Heart left ventricle (tissue), 16 donors: ENCODE measurements at regions of chr6 and their contacts with region 1.

Region 1: GRCh38 chr6:27188885-27189418 is 58.5 kb upstream of the PRSS16 start:
- DNase-seq: peak in 4 of 5 donors; percentile 52 to 65 (median 54)
- ATAC-seq: peak; percentile 77 to 97 (median 93)
- H3K4me3 ChIP-seq: peak overlapping the region; percentile 30 to 75 (median 65)
- H3K27ac ChIP-seq: peak overlapping the region in 11 of 12 donors; percentile 45 to 80 (median 65)
- H3K4me1 ChIP-seq: peaks cover 0 to 9% (median 4%) of the 10 kb centered on the region in 12 donors
- H3K27me3 ChIP-seq: peaks cover 0 to 4% (median 0%) of the 10 kb centered on the region in 9 donors
- CTCF ChIP-seq: peak; percentile 65 to 85 (median 78)
- POLR2A ChIP-seq: no peak

Region 2: GRCh38 chr6:27114792-27115191 is 74.2 kb before region 1 on chr6:
- intact Hi-C with region 1: no loop called
- DNase-seq: no peak
- ATAC-seq: no peak
- H3K4me3 ChIP-seq: no peak overlapping the region
- H3K27ac ChIP-seq: no peak overlapping the region
- H3K4me1 ChIP-seq: no peaks in the 10 kb centered on the region
- H3K27me3 ChIP-seq: no peaks in the 10 kb centered on the region
- CTCF ChIP-seq: no peak
- POLR2A ChIP-seq: no peak

Region 3: GRCh38 chr6:27472617-27473400 is 283.9 kb after region 1 on chr6 and contains the start of gene ZNF184:
- intact Hi-C with region 1: loop called in 4 of 10 experiments (anchors 10 kb)
- DNase-seq: peak; percentile 95 to 96 (median 96)
- ATAC-seq: peak; percentile 99 to 100 (median 100)
- H3K4me3 ChIP-seq: peak within 1 kb of the TSS; percentile 52 to 99 (median 86)
- H3K27ac ChIP-seq: peak within 1 kb of the TSS; percentile 34 to 92 (median 86)
- H3K4me1 ChIP-seq: peaks cover 0 to 37% (median 19%) of the 10 kb centered on the region in 12 donors
- H3K27me3 ChIP-seq: no peaks in the 10 kb centered on the region
- CTCF ChIP-seq: peak in 3 of 12 donors; percentile 2 to 29 (median 24)
- POLR2A ChIP-seq: peak in 1 of 2 donors; percentile 78
- total RNA-seq, gene ZNF184: 3.2 to 6.5 (median 4.0) TPM

Region 4: DNA sequence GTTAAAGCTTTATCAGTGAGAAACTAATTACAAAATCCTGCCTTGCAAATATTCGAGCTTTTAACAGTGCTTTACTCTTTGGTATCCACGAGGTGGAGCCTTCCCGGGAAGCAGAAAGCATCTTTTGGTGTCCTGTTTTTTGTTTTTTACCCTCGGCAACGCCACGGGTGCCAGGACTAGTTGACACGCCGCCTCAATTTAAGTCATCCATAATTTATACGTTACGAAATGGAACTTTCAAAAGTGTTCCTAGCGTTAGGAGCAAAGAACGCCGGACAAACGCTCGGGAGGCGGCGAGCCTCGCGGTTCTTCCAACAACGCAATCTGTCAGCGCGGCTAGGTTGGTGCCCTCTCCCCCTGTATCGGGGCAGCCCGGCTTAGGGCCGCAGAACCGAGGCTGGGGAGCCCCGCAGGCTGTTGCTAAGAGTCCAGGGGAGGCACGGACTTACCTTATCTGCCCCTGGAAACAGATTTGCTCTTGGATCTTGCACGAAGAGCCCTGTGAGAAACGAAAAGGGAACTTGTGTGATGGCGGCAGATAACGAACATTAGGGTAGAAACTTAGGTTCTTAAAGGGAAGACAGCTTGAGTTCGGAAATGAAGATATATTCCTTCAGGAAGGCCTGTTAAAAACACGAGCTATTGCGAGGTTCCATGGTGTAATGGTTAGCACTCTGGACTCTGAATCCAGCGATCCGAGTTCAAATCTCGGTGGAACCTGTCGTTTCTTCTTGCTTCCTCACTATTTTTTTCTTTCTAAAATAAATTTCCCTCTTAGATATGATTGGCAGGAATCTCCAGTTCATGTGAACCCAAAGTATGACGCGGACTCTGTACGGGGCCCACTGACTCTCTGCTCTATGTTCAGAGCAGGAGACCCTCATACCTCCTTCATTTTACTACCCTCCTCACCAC is 330.2 kb after region 1 on chr6:
- intact Hi-C with region 1: loop called in 1 of 10 experiments (anchors 10 kb)
- DNase-seq: peak; percentile 50 to 71 (median 55)
- ATAC-seq: peak; percentile 90 to 95 (median 93)
- H3K4me3 ChIP-seq: peak overlapping the region; percentile 43 to 83 (median 70)
- H3K27ac ChIP-seq: peak overlapping the region; percentile 68 to 94 (median 80)
- H3K4me1 ChIP-seq: peaks cover 0 to 13% (median 7%) of the 10 kb centered on the region in 12 donors
- H3K27me3 ChIP-seq: peaks cover 0 to 23% (median 7%) of the 10 kb centered on the region in 9 donors
- CTCF ChIP-seq: peak; percentile 48 to 78 (median 66)
- POLR2A ChIP-seq: no peak

Region 5: DNA sequence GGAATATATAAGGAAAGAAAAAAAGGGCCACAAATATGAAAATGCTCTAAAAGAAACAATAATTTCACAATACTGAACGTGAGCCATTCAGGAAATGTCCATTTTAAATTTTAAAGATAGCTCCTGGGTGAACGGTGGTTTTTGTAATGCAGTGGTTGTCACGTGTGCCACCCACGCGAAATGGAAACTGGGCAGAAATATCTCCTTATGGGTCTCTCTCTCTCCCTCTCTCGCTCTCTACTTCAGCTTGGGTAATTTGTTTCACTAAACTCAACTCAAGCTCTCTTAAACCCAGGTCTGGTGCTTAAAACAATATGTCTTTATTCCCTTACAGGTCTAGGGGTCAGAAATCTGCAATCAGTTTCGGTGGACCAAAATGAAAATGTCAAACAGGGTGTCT is 572.4 kb after region 1 on chr6:
- intact Hi-C with region 1: loop called in 1 of 10 experiments (anchors 10 kb)
- DNase-seq: no peak
- ATAC-seq: no peak
- H3K4me3 ChIP-seq: no peak overlapping the region
- H3K27ac ChIP-seq: no peak overlapping the region
- H3K4me1 ChIP-seq: peaks cover 0 to 6% (median 0%) of the 10 kb centered on the region in 12 donors
- H3K27me3 ChIP-seq: peaks cover 8 to 93% (median 47%) of the 10 kb centered on the region in 9 donors
- CTCF ChIP-seq: no peak
- POLR2A ChIP-seq: no peak

Region 6: DNA sequence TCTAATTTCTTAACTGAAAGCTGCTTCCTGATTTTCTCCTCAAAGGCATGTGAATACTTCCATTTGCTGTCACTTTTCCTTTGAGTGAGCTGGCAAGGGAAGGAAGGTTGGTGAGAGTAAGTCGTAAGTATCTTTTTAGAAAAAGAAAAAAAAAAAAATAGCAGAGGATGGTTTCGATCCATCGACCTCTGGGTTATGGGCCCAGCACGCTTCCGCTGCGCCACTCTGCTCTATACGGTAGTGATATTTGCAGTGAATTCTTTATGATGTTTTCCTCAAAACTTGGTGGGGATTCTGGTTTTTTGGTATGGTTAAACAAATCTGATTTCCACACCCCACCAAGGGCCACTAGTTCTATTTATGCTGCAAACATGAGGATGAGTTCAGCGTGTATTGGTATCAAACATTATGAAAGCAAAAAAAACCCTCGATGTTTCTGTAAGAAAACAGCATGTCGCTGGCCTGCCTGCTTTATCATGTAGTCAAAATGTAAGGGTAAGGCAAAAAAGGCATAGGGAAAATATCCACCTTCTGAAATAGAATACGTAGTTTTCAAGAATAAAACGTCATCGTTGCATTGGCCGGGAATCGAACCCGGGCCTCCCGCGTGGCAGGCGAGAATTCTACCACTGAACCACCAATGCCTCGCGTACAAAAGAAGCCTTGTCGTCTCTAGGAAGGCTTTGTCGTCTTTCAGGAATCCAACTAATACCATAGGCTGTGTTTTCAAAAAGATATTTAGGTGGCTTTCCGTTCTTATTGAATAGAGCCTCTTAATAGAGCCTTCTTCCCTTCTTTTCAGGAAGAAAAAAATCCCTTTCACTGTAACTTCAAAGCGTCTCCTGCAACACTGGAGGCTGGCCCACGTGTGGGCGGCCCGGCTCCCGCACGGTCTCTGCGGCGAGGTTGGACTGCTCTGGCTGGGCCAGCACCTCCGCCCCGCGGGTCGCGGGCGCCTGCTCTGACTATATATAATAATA is 713.7 kb after region 1 on chr6:
- intact Hi-C with region 1: loop called in 5 of 10 experiments (anchors 5 to 10 kb)
- DNase-seq: peak; percentile 73 to 86 (median 83)
- ATAC-seq: peak; percentile 90 to 96 (median 96)
- H3K4me3 ChIP-seq: peak overlapping the region; percentile 30 to 71 (median 60)
- H3K27ac ChIP-seq: peak overlapping the region in 11 of 12 donors; percentile 36 to 90 (median 76)
- H3K4me1 ChIP-seq: peaks cover 0 to 14% (median 2%) of the 10 kb centered on the region in 12 donors
- H3K27me3 ChIP-seq: no peaks in the 10 kb centered on the region
- CTCF ChIP-seq: no peak
- POLR2A ChIP-seq: no peak